GM10248 (cell line): ENCODE measurements at regions of chr5 and their contacts with region 1.

Region 1: DNA sequence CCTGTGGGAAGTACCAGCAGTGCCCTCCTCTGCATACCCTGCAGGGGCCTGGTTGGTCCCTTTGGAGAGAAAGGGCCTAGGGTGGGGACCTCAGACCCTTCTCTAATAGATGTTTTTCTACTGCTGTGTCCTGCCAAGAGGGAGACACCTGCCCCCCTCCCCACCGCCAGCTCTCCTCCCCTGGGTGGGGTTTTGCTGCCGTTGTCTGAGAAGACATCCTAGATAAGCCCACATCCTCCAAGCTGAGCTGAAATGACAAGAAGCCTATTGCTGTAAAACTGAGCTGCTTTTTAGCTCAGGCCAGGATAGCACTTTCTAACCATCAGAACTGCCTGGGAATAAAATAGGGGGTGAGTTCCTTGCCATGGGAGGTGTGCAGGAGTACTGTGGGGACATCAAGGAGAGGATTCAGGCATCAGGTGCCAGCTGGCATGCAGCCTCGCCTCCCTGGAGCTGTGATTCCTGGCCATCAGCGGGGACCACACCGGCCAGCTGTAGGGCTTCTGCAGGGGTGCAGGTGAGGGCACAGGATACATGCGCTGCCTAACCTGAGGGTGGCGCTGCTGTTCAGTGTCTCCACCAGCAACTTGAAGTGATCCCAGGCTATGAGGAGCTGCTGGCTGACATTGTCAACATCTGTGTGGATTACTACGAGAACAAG is 37.9 kb downstream of the CYFIP2 start:
- DNase-seq: no peak
- CTCF ChIP-seq: peak; percentile 24

Region 2: DNA sequence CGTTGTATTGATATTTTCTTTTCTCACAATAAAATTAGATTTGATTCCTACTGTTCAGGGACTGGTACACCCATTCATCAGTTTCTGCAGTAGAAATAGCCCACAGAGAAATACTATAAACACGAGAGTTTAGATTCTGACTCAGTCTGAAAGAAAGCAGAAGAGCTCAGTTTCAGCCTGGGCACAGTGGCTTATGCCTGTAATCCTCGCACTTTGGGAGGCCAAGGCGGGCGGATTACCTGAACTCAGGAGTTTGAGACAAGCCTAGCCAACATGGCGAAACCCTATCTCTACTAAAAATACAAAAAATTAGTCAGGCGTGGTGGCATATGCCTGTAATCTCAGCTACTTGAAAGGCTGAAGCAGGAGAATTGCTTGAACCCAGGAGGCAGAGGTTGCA is 114.6 kb before region 1 on chr5:
- CTCF ChIA-PET with region 1: no interaction called
- POLR2A ChIA-PET with region 1: no interaction called
- DNase-seq: no peak
- CTCF ChIP-seq: no peak

Region 3: GRCh38 chr5:157271740-157272271 is 32.0 kb before region 1 on chr5:
- CTCF ChIA-PET with region 1: interaction called, 11 read pairs
- POLR2A ChIA-PET with region 1: no interaction called
- DNase-seq: peak; percentile 74
- CTCF ChIP-seq: no peak